IMR-90 (cell line): ENCODE measurements at regions of chr2 and their contacts with region 1.

Region 1: GRCh38 chr2:230981704-230982103 is 14.2 kb upstream of the SPATA3 start:
- DNase-seq: no peak
- ATAC-seq: no peak
- H3K4me3 ChIP-seq: no peak overlapping the region
- H3K27ac ChIP-seq: no peak overlapping the region
- H3K4me1 ChIP-seq: no peaks in the 10 kb centered on the region
- H3K27me3 ChIP-seq: peaks cover 10% of the 10 kb centered on the region
- CTCF ChIP-seq: no peak
- POLR2A ChIP-seq: no peak
- RAD21 ChIP-seq: no peak

Region 2: DNA sequence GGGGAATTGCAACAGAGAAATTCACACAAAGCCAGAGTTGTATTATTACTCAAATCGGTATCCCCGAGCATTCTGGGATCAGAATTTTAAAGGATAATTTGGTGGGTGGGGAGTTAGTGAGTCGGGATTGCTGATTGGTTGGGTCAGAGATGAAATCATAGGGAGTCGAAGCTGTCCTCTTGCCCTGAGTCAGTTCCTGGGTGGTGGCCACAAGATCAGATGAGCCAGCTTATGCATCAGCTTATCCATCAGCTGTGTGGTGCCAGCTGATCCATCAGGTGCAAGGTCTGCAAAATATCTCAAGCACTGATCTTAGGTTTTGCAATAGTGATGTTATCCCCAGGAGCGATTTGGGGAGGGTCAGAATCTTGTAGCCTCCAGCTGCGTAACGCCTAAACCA is 151.3 kb before region 1 on chr2:
- CTCF ChIA-PET with region 1: no interaction called
- POLR2A ChIA-PET with region 1: no interaction called
- dilution Hi-C with region 1: no loop called
- in situ Hi-C with region 1: loop called (anchors 5 kb)
- intact Hi-C with region 1: no loop called
- DNase-seq: no peak
- ATAC-seq: no peak
- H3K4me3 ChIP-seq: no peak overlapping the region
- H3K27ac ChIP-seq: no peak overlapping the region
- H3K4me1 ChIP-seq: no peaks in the 10 kb centered on the region
- H3K27me3 ChIP-seq: peaks cover 34% of the 10 kb centered on the region
- CTCF ChIP-seq: no peak
- POLR2A ChIP-seq: no peak
- RAD21 ChIP-seq: no peak

Region 3: DNA sequence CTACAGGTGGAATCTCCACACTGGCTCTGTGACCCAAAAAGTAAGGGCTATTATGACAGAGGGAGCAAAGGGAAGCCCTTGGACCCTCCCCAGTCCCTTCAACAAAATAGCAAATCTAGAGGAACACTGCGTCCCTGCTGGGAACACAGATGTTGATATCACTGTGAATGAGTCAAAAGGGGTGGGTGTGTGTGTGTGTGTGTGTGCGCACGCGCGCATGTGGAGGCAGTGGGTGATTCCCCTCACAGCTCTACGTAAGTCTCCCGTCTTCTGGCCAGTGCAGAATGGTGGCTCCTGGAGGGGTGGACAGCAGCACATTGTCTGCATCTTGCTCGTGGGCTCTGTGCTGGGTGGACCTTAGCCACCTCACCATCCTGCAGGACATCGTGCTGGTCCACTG is 47.9 kb after region 1 on chr2:
- CTCF ChIA-PET with region 1: no interaction called
- POLR2A ChIA-PET with region 1: no interaction called
- dilution Hi-C with region 1: no loop called
- in situ Hi-C with region 1: no loop called
- intact Hi-C with region 1: no loop called
- DNase-seq: no peak
- ATAC-seq: no peak
- H3K4me3 ChIP-seq: no peak overlapping the region
- H3K27ac ChIP-seq: no peak overlapping the region
- H3K4me1 ChIP-seq: no peaks in the 10 kb centered on the region
- H3K27me3 ChIP-seq: peaks cover 29% of the 10 kb centered on the region
- CTCF ChIP-seq: no peak
- POLR2A ChIP-seq: no peak
- RAD21 ChIP-seq: no peak

Region 4: DNA sequence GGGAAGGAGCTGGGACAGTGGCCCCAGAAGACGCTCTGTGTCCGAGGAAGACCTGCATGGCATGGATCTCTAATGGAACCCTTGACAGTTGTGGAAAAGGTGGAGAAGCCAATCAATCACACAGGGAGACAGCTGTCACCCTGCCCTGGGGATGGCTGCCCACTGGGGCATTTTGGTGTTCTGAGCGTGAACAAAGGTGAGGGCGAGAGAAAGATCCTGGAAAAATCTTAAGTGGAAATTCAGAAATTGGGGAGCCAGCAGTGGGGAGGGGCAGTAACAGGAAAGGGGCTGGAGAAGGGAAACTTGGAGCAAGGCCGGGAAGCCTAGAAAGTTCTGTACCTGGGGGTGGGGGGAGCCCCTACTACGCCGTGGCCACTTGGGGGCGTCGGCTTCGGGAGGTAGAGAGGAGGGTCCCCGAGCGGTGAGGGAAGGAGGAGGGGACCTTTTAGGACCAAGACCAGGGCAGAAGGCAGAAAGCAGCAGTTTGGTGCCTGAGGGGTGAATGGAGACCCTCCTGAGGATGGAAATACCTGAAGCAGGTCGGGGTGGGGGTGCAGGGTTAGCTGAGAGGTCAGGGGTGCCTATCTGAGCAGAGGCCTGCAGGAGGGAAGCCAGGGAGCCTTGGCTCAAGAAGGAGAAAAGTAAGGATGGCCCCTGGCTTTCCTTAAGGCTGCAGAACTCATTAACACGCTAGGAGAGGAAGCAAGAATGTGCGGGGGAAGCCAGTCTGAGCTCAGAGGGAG is 2001.4 kb after region 1 on chr2:
- CTCF ChIA-PET with region 1: no interaction called
- POLR2A ChIA-PET with region 1: no interaction called
- dilution Hi-C with region 1: no loop called
- in situ Hi-C with region 1: no loop called
- intact Hi-C with region 1: no loop called
- DNase-seq: no peak
- ATAC-seq: no peak
- H3K4me3 ChIP-seq: no peak overlapping the region
- H3K27ac ChIP-seq: no peak overlapping the region
- H3K4me1 ChIP-seq: peaks cover 8% of the 10 kb centered on the region
- H3K27me3 ChIP-seq: peaks cover 5% of the 10 kb centered on the region; the same call in 1 of the 2 replicates
- CTCF ChIP-seq: no peak
- POLR2A ChIP-seq: no peak
- RAD21 ChIP-seq: no peak